ENCODE measurements at regions of chr9 and their contacts with region 1.

Region 1: GRCh38 chr9:21455320-21455719 is 15.1 kb downstream of the IFNA1 start:
- H3K4me3 ChIP-seq: no peak overlapping the region
- H3K27ac ChIP-seq: no peak overlapping the region
- H3K4me1 ChIP-seq: no peaks in the 10 kb centered on the region
- CTCF ChIP-seq: peak; percentile 38; the same call in 1 of the 2 replicates

Region 2: DNA sequence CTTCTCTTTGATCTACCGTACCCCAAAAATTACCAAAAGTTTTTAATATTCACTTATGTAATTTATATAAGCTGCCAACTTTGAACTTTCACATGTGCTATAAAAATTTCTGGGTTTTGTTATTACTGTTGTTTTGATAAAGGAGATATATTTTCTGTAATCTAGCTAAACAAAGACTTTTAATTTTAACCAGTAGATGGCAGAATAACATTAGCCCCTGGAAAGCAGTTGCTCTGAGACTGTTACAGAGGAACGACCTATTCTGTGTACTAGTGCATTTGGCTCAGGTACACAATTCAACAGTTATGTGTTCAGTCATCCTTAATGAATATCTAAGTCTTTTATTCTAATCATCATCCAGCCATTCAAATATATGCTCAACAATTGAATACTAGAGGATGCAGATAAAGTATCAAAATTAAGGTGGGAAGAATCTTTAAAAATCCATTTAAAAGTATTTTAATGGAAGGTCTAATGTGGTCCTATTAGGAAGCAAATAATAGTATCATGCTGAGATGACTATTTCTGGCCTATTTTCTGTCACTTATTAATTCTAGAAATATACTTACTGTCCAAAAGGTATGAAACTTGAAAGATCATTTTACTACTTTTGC is 128.7 kb before region 1 on chr9:
- CTCF ChIA-PET with region 1: interaction called, 64 read pairs
- POLR2A ChIA-PET with region 1: no interaction called
- H3K4me3 ChIP-seq: no peak overlapping the region
- H3K27ac ChIP-seq: no peak overlapping the region
- H3K4me1 ChIP-seq: peaks cover 1% of the 10 kb centered on the region; the same call in 1 of the 2 replicates
- CTCF ChIP-seq: no peak

Region 3: GRCh38 chr9:21334701-21335632 is 120.4 kb before region 1 on chr9 and contains the start of gene KLHL9:
- CTCF ChIA-PET with region 1: interaction called, 16 read pairs
- POLR2A ChIA-PET with region 1: no interaction called
- H3K4me3 ChIP-seq: peak within 1 kb of the TSS; percentile 62
- H3K27ac ChIP-seq: peak within 1 kb of the TSS; percentile 98
- H3K4me1 ChIP-seq: peaks cover 15% of the 10 kb centered on the region
- CTCF ChIP-seq: peak; percentile 46; the same call in 1 of the 2 replicates

Region 4: GRCh38 chr9:21481470-21482056 is 26.2 kb after region 1 on chr9:
- CTCF ChIA-PET with region 1: no interaction called
- POLR2A ChIA-PET with region 1: no interaction called
- H3K4me3 ChIP-seq: no peak overlapping the region
- H3K27ac ChIP-seq: no peak overlapping the region
- H3K4me1 ChIP-seq: no peaks in the 10 kb centered on the region
- CTCF ChIP-seq: no peak

Region 5: GRCh38 chr9:21491742-21492141 is 36.4 kb after region 1 on chr9:
- CTCF ChIA-PET with region 1: no interaction called
- POLR2A ChIA-PET with region 1: no interaction called
- H3K4me3 ChIP-seq: no peak overlapping the region
- H3K27ac ChIP-seq: no peak overlapping the region
- H3K4me1 ChIP-seq: no peaks in the 10 kb centered on the region
- CTCF ChIP-seq: no peak